IMR-90 (cell line): ENCODE measurements at regions of chr13 and their contacts with region 1.

Region 1: GRCh38 chr13:106197496-106197895 is 338.0 kb downstream of the EFNB2 start:
- DNase-seq: no peak
- ATAC-seq: no peak
- H3K4me3 ChIP-seq: no peak overlapping the region
- H3K27ac ChIP-seq: no peak overlapping the region
- H3K4me1 ChIP-seq: no peaks in the 10 kb centered on the region
- H3K27me3 ChIP-seq: peaks cover 3% of the 10 kb centered on the region; the same call in 1 of the 2 replicates
- CTCF ChIP-seq: no peak
- POLR2A ChIP-seq: no peak
- RAD21 ChIP-seq: no peak

Region 2: GRCh38 chr13:106186366-106187030 is 11.0 kb before region 1 on chr13:
- CTCF ChIA-PET with region 1: no interaction called
- POLR2A ChIA-PET with region 1: no interaction called
- dilution Hi-C with region 1: no loop called
- in situ Hi-C with region 1: no loop called
- intact Hi-C with region 1: loop called (anchors 1 kb)
- DNase-seq: peak; percentile 9
- ATAC-seq: no peak
- H3K4me3 ChIP-seq: no peak overlapping the region
- H3K27ac ChIP-seq: no peak overlapping the region
- H3K4me1 ChIP-seq: no peaks in the 10 kb centered on the region
- H3K27me3 ChIP-seq: no peaks in the 10 kb centered on the region
- CTCF ChIP-seq: no peak
- POLR2A ChIP-seq: no peak
- RAD21 ChIP-seq: no peak